Vagina (tissue), 2 donors: ENCODE measurements at regions of chr2 and their contacts with region 1.

Region 1: GRCh38 chr2:58484201-58484600 is 243.1 kb upstream of the FANCL start:
- DNase-seq: no peak
- H3K4me3 ChIP-seq: no peak overlapping the region
- H3K27ac ChIP-seq: no peak overlapping the region
- H3K4me1 ChIP-seq: no peaks in the 10 kb centered on the region
- H3K27me3 ChIP-seq: no peaks in the 10 kb centered on the region
- CTCF ChIP-seq: no peak
- POLR2A ChIP-seq: no peak

Region 2: GRCh38 chr2:56713161-56713676 is 1771.0 kb before region 1 on chr2:
- intact Hi-C with region 1: loop called (anchors 5 kb)
- DNase-seq: no peak
- H3K4me3 ChIP-seq: no peak overlapping the region
- H3K27ac ChIP-seq: no peak overlapping the region
- H3K4me1 ChIP-seq: no peaks in the 10 kb centered on the region
- H3K27me3 ChIP-seq: no peaks in the 10 kb centered on the region
- CTCF ChIP-seq: no peak
- POLR2A ChIP-seq: no peak